Heart right ventricle (tissue), 16 donors: ENCODE measurements at regions of chr3 and their contacts with region 1.

Region 1: DNA sequence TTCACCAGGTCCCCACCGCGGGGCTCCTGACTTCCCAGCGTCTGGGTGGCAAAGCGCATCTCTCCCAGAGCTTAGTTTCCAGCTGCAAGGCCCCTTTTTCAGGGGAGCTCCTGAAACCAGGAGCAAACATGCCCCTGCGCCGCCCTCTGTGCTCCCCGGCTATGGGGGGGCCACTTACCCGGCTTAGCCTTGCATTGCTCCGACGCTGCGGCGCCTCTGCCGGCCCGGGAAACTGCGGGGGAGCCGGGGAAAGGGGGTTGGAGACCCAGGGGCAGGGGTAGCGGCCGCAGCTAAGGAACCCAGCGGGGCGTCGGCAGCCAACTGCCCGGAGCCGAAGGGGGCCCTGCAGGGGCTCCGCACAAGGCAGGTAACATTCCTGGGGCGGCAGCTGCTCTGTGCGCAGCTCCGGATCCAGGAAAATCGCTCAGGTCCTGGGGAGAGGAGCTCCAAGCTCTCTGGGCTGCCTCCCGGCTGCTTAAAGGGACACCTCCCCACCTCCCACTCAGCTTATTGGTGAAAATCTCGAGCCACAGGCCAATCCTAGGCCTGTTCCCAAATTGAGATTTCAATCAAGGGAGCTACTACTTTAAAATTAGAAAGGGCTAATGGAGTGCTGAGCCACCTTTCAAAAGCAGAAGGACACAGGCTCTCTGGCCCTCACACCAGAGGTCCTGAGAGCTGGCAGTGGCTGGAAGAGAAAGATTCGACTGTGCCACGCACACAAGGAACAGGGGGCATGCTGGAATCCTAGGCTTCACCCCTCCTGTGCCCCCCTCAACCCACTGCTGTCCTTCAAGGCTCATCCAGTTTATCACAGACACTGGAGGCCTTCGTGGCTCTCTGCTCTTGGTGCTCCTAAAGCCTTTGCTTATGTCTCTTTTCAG is 42.7 kb upstream of the PRICKLE2 start:
- DNase-seq: peak; percentile 57 to 76
- ATAC-seq: peak; percentile 88 to 94 (median 91)
- H3K4me3 ChIP-seq: peak overlapping the region; percentile 61 to 88 (median 78)
- H3K27ac ChIP-seq: peak overlapping the region; percentile 55 to 93 (median 88)
- H3K4me1 ChIP-seq: peaks cover 5 to 51% (median 31%) of the 10 kb centered on the region in 9 donors
- H3K27me3 ChIP-seq: peaks cover 0 to 7% (median 0%) of the 10 kb centered on the region in 7 donors
- CTCF ChIP-seq: peak in 2 of 9 donors; percentile 15 to 22

Region 2: DNA sequence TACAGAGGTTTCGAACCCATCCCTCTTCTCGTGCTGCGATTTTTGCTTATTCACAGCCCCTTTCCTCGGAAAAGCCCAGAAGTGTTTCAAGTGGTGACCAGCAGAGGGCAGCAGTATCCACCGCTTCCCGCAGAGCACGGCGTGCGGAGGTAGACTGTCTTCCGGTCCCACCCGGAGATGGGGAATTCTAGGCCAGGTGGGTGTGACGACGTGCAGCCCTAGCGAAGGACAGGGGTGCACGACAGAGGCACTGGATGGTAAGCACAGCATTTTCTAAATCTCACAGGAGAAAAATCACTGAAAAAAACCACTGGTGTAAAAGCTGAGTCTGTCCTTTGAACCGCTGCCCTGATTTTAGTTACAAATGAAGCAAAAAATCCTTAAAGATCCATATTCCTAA is 237.2 kb before region 1 on chr3:
- intact Hi-C with region 1: loop called in 1 of 10 experiments (anchors 5 kb)
- DNase-seq: peak; percentile 70 to 74
- ATAC-seq: peak; percentile 82 to 96 (median 89)
- H3K4me3 ChIP-seq: peak overlapping the region in 7 of 10 donors; percentile 9 to 47 (median 29)
- H3K27ac ChIP-seq: no peak overlapping the region
- H3K4me1 ChIP-seq: peaks cover 0 to 11% (median 3%) of the 10 kb centered on the region in 9 donors
- H3K27me3 ChIP-seq: peaks cover 0 to 18% (median 4%) of the 10 kb centered on the region in 7 donors
- CTCF ChIP-seq: peak; percentile 79 to 96 (median 87)

Region 3: DNA sequence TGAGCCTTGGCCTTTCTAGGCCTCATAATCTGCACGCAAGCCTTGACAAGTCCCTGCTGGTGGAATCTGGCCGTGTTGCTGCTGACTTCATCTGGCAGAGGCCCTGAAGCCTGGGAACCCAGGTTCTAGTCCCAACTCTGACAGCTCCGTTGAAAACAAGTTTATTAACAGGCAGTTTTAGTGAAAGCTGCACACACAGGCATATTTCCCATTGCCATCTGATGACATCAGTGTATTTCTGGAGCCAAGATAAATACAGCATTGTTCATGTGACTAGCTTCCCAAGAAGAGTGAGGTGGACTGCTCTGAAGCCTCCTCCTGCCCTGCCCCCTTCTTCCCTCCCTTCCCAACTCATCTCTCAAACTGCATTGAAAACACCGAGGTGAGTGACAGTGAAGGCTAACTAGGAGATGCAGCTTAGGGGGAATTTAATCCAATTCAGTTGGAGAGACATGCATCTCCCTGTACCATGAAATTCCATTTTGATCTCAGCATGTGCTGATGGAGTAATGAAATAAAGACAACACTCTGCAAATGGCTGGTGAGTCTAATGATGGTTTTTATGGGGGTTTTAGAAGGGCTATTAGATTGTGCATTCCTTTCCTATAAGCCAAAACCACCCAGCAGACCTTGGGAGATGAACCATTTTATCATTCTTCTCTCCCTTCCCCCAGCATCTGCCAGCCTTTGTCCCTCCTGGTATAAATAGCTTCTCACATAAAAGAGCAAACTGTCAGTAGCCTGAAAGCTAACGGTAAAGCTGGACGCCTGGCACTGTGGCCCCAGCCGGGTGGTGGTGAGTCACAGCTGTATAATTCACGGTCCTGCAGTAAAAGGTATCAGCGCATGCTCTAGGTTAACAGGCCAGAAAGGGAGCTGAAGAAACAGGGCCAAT is 80.7 kb before region 1 on chr3:
- intact Hi-C with region 1: loop called in 3 of 10 experiments (anchors 5 to 10 kb)
- DNase-seq: peak; percentile 54 to 75
- ATAC-seq: peak; percentile 78 to 89 (median 84)
- H3K4me3 ChIP-seq: peak overlapping the region in 1 of 10 donors; percentile 2
- H3K27ac ChIP-seq: peak overlapping the region; percentile 31 to 85 (median 72)
- H3K4me1 ChIP-seq: peaks cover 23 to 82% (median 59%) of the 10 kb centered on the region in 9 donors
- H3K27me3 ChIP-seq: no peaks in the 10 kb centered on the region
- CTCF ChIP-seq: peak in 2 of 9 donors; percentile 16 to 26

Region 4: DNA sequence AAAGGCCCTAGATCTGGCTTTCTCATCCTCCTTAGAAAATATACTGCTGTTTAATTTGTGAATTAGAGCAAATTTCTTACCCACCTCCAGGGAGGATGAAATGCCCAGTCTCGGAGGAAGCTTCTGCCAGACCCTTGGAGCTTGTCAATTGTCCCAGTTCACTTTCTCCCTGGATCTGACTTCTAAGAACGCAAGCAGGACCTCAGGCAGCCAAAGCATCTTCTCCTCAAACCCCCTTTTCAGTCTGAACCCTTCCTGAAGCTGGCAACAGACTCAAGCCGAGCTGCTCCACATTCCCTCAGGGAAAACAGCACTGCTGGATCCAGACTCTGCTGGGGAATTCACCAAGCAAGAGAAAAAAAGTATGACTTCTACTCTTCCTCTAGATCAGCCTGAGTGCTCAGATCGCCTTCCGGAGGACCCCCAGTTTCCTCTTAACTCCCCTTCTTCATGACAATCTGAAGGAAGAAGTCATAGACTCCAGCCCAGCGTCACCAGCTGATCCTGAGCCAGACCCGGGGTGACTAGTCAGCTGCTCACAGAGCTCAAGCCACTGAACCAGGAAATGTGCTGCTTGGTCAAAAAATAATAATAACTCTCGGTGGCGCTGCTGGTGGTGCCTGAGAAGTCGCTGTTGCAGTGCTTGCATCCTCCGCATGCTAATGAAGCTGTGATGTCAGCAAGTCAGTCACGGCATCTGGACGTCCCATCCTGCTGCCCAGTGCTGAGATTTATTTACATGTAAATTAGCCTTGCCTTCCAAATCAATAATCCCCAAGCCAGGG is 42.9 kb before region 1 on chr3 and contains the start of gene PRICKLE2:
- intact Hi-C with region 1: loop called in 3 of 10 experiments (anchors 5 kb)
- DNase-seq: peak; percentile 75 to 89
- ATAC-seq: peak; percentile 75 to 88 (median 84)
- H3K4me3 ChIP-seq: peak within 1 kb of the TSS in 9 of 10 donors; percentile 6 to 54 (median 47)
- H3K27ac ChIP-seq: peak within 1 kb of the TSS; percentile 27 to 89 (median 78)
- H3K4me1 ChIP-seq: peaks cover 11 to 80% (median 59%) of the 10 kb centered on the region in 9 donors
- H3K27me3 ChIP-seq: no peaks in the 10 kb centered on the region
- CTCF ChIP-seq: peak in 5 of 9 donors; percentile 16 to 54 (median 39)
- total RNA-seq, gene PRICKLE2: 6.4 to 12.2 (median 8.4) TPM

Region 5: GRCh38 chr3:64454766-64455165 is 186.8 kb after region 1 on chr3:
- intact Hi-C with region 1: loop called in 1 of 10 experiments (anchors 1 kb)
- DNase-seq: no peak
- ATAC-seq: no peak
- H3K4me3 ChIP-seq: no peak overlapping the region
- H3K27ac ChIP-seq: no peak overlapping the region
- H3K4me1 ChIP-seq: no peaks in the 10 kb centered on the region
- H3K27me3 ChIP-seq: no peaks in the 10 kb centered on the region
- CTCF ChIP-seq: no peak

Region 6: GRCh38 chr3:64548200-64548889 is 280.4 kb after region 1 on chr3:
- intact Hi-C with region 1: no loop called
- DNase-seq: peak; percentile 38 to 44
- ATAC-seq: peak; percentile 74 to 90 (median 81)
- H3K4me3 ChIP-seq: no peak overlapping the region
- H3K27ac ChIP-seq: peak overlapping the region in 5 of 10 donors; percentile 29 to 53 (median 45)
- H3K4me1 ChIP-seq: peaks cover 0 to 24% (median 12%) of the 10 kb centered on the region in 9 donors
- H3K27me3 ChIP-seq: no peaks in the 10 kb centered on the region
- CTCF ChIP-seq: no peak